K562 (cell line): ENCODE measurements at regions of chr18 and their contacts with region 1.

Region 1: DNA sequence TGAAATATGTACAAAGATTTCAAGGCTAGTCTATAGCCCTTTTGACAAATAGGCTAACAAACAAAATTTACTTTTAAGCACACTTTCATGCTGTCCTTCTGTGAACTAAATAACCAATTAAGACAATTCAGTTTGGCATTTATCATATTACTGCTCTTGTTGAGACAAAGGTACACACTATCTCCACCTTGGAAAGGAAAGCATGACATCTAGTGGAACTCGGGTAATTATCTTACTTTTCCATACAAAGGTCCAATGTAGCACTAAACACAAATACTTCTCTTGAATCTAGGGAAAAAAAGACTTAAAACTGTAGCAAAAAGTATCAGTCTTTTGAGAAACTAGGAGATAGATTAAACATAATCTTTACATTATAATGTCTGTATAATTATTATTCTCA is 125.0 kb upstream of the CD226 start:
- DNase-seq: peak in 1 of 4 experiments; percentile 10
- ATAC-seq: peak; percentile 61; the same call in 2 of the 3 replicates
- H3K4me3 ChIP-seq: no peak overlapping the region
- H3K27ac ChIP-seq: no peak overlapping the region
- H3K4me1 ChIP-seq: no peaks in the 10 kb centered on the region
- H3K27me3 ChIP-seq: no peaks in the 10 kb centered on the region
- CTCF ChIP-seq: peak in 1 of 3 experiments; percentile 54; a peak in 2 of 6 replicates
- EP300 ChIP-seq: no peak
- POLR2A ChIP-seq: no peak
- RAD21 ChIP-seq: peak; percentile 70

Region 2: GRCh38 chr18:69845593-69846506 is 226.8 kb before region 1 on chr18:
- CTCF ChIA-PET with region 1: no interaction called
- POLR2A ChIA-PET with region 1: no interaction called
- in situ Hi-C with region 1: no loop called
- intact Hi-C with region 1: loop called (anchors 5 kb)
- DNase-seq: peak in 1 of 4 experiments; percentile 2
- ATAC-seq: no peak
- H3K4me3 ChIP-seq: no peak overlapping the region
- H3K27ac ChIP-seq: no peak overlapping the region
- H3K4me1 ChIP-seq: no peaks in the 10 kb centered on the region
- H3K27me3 ChIP-seq: no peaks in the 10 kb centered on the region
- CTCF ChIP-seq: peak in 1 of 3 experiments; percentile 42; a peak in 2 of 6 replicates
- EP300 ChIP-seq: no peak
- POLR2A ChIP-seq: no peak
- RAD21 ChIP-seq: peak; percentile 25 to 55; a peak in 3 of 4 replicates

Region 3: DNA sequence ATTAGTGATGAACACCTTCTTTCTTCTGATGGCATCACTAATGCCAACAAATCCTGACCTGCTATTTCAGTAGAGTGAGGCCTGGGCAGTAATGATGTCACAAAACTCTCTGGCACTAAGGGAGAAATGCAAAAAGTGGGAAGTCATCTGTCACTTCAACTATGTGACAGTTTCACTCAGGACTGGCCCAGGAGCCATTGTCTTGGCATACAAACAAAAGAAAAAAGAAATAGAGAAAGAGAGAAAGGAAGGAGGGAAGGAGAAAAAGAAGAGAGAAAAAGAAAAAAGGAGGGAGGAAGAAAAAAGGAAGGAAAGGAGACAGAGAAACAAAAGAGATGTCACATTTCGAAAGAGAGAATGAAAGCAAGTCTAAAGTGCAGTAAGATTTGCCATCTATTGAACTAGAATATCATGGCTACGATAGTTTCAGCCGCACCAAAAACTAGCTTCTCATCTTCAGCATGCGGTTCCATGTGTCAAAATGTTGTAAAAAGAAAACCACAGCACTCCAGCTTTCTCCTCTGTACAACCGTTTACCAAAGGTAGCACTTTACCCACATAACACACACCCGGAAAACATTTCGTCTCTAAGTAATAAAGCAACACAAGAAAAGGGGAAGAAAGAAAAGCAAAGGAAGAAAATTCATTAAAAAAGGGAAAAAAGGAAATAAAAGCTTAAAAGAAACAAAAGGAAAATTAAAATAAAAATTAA is 175.1 kb before region 1 on chr18:
- CTCF ChIA-PET with region 1: no interaction called
- POLR2A ChIA-PET with region 1: no interaction called
- in situ Hi-C with region 1: no loop called
- intact Hi-C with region 1: no loop called
- DNase-seq: no peak
- ATAC-seq: no peak
- H3K4me3 ChIP-seq: no peak overlapping the region
- H3K27ac ChIP-seq: no peak overlapping the region
- H3K4me1 ChIP-seq: no peaks in the 10 kb centered on the region
- H3K27me3 ChIP-seq: no peaks in the 10 kb centered on the region
- CTCF ChIP-seq: no peak
- EP300 ChIP-seq: no peak
- POLR2A ChIP-seq: no peak
- RAD21 ChIP-seq: no peak

Region 4: DNA sequence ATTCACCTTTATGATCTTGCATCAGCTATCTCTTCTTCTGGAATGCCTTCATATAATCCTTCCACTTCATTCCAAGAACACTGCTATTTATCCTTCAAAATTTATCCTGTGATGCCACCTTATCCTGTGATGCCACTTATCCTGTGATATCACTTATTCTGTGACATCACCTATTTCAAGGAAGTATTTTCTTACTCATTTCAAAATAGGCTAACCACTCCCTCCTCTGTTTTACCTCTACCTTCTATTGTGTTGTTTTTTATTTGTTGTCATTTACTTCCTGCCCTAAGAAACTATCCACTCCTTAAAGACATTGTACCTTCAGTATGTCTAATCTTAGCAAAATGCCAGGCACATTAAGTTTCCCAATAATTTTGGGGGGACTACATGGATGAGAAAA is 163.8 kb before region 1 on chr18:
- CTCF ChIA-PET with region 1: no interaction called
- POLR2A ChIA-PET with region 1: no interaction called
- in situ Hi-C with region 1: no loop called
- intact Hi-C with region 1: no loop called
- DNase-seq: no peak
- ATAC-seq: no peak
- H3K4me3 ChIP-seq: no peak overlapping the region
- H3K27ac ChIP-seq: no peak overlapping the region
- H3K4me1 ChIP-seq: no peaks in the 10 kb centered on the region
- H3K27me3 ChIP-seq: no peaks in the 10 kb centered on the region
- CTCF ChIP-seq: no peak
- EP300 ChIP-seq: no peak
- POLR2A ChIP-seq: no peak
- RAD21 ChIP-seq: no peak

Region 5: GRCh38 chr18:69948919-69949537 is 123.7 kb before region 1 on chr18:
- CTCF ChIA-PET with region 1: no interaction called
- POLR2A ChIA-PET with region 1: no interaction called
- in situ Hi-C with region 1: no loop called
- intact Hi-C with region 1: loop called (anchors 10 kb)
- DNase-seq: peak in 1 of 4 experiments; percentile 17
- ATAC-seq: peak; percentile 62
- H3K4me3 ChIP-seq: no peak overlapping the region
- H3K27ac ChIP-seq: no peak overlapping the region
- H3K4me1 ChIP-seq: peaks cover 0 to 6% of the 10 kb centered on the region in 2 experiments; a peak in 2 of 5 replicates
- H3K27me3 ChIP-seq: no peaks in the 10 kb centered on the region
- CTCF ChIP-seq: no peak
- EP300 ChIP-seq: no peak
- POLR2A ChIP-seq: no peak
- RAD21 ChIP-seq: no peak

Region 6: DNA sequence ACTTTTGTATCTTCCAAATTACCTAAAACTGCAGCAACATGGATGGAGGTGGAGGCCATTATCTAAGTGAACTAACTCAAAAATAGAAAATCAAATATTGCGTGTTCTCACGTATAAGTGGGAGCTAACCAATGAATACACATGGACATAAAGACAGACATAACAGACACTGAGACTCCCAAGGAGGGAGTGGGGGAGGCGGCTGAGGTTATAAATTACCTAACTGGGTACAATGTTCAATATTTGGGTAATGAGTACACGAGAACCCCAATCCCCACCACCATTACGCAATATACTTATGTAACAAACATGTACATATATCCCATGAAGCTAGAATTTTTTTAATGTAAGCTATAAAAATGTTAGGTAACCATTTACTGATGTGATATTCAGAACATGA is 13.0 kb after region 1 on chr18:
- CTCF ChIA-PET with region 1: no interaction called
- POLR2A ChIA-PET with region 1: no interaction called
- in situ Hi-C with region 1: no loop called
- intact Hi-C with region 1: no loop called
- DNase-seq: no peak
- ATAC-seq: no peak
- H3K4me3 ChIP-seq: no peak overlapping the region
- H3K27ac ChIP-seq: no peak overlapping the region
- H3K4me1 ChIP-seq: no peaks in the 10 kb centered on the region
- H3K27me3 ChIP-seq: no peaks in the 10 kb centered on the region
- CTCF ChIP-seq: no peak
- EP300 ChIP-seq: no peak
- POLR2A ChIP-seq: no peak
- RAD21 ChIP-seq: no peak